ENCODE measurements at regions of chr9 and their contacts with region 1.

Region 1: GRCh38 chr9:37405350-37405749 is 17.1 kb upstream of the GRHPR start:
- DNase-seq: no peak
- ATAC-seq: no peak
- H3K4me3 ChIP-seq: no peak overlapping the region
- H3K27ac ChIP-seq: no peak overlapping the region
- H3K4me1 ChIP-seq: no peaks in the 10 kb centered on the region
- H3K27me3 ChIP-seq: no peaks in the 10 kb centered on the region; the same call in 1 of the 2 replicates
- CTCF ChIP-seq: no peak

Region 2: GRCh38 chr9:37004424-37004935 is 400.9 kb before region 1 on chr9:
- CTCF ChIA-PET with region 1: no interaction called
- POLR2A ChIA-PET with region 1: interaction called, 11 read pairs
- in situ Hi-C with region 1: no loop called
- intact Hi-C with region 1: loop called (anchors 5 kb)
- DNase-seq: no peak
- ATAC-seq: no peak
- H3K4me3 ChIP-seq: no peak overlapping the region
- H3K27ac ChIP-seq: no peak overlapping the region
- H3K4me1 ChIP-seq: no peaks in the 10 kb centered on the region
- H3K27me3 ChIP-seq: peaks cover 42% of the 10 kb centered on the region
- CTCF ChIP-seq: no peak

Region 3: GRCh38 chr9:37390759-37391158 is 14.6 kb before region 1 on chr9:
- CTCF ChIA-PET with region 1: interaction called, 10 read pairs
- POLR2A ChIA-PET with region 1: no interaction called
- in situ Hi-C with region 1: no loop called
- intact Hi-C with region 1: no loop called
- DNase-seq: no peak
- ATAC-seq: no peak
- H3K4me3 ChIP-seq: no peak overlapping the region
- H3K27ac ChIP-seq: no peak overlapping the region
- H3K4me1 ChIP-seq: peaks cover 3% of the 10 kb centered on the region; the same call in 1 of the 2 replicates
- H3K27me3 ChIP-seq: no peaks in the 10 kb centered on the region; the same call in 1 of the 2 replicates
- CTCF ChIP-seq: no peak